ENCODE measurements at regions of chrX and their contacts with region 1.

Region 1: DNA sequence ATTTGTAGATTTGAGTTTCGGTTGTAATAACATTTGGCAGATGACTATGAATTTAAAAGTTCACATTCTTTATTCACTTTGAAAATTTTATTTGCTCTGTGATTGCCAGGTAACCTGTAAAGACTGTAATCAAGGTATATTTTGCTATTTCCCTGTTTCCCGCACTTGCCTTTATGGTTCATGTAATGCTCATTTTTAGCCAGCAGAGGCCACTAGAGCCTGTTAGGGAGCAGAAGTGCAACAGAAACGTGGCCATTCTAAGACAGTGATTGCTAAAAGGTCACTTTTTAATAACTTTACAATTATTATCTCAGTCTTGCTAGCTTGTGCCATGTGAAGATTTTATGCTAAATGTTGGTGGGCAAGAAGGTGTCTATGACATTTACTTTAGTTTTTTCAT is 12.4 kb downstream of the YIPF6 start:
- DNase-seq: peak; percentile 43
- H3K4me3 Mint-ChIP-seq: no peak overlapping the region
- H3K27ac Mint-ChIP-seq: no peak overlapping the region
- H3K4me1 Mint-ChIP-seq: peaks cover 22% of the 10 kb centered on the region
- H3K27me3 Mint-ChIP-seq: no peaks in the 10 kb centered on the region

Region 2: GRCh38 chrX:68238568-68238967 is 272.7 kb before region 1 on chrX:
- CTCF ChIA-PET with region 1: no interaction called
- intact Hi-C with region 1: no loop called
- DNase-seq: no peak
- H3K4me3 Mint-ChIP-seq: no peak overlapping the region
- H3K27ac Mint-ChIP-seq: no peak overlapping the region
- H3K4me1 Mint-ChIP-seq: no peaks in the 10 kb centered on the region
- H3K27me3 Mint-ChIP-seq: no peaks in the 10 kb centered on the region

Region 3: GRCh38 chrX:68273887-68274286 is 237.4 kb before region 1 on chrX:
- CTCF ChIA-PET with region 1: no interaction called
- intact Hi-C with region 1: no loop called
- DNase-seq: no peak
- H3K4me3 Mint-ChIP-seq: no peak overlapping the region
- H3K27ac Mint-ChIP-seq: no peak overlapping the region
- H3K4me1 Mint-ChIP-seq: no peaks in the 10 kb centered on the region
- H3K27me3 Mint-ChIP-seq: no peaks in the 10 kb centered on the region

Region 4: DNA sequence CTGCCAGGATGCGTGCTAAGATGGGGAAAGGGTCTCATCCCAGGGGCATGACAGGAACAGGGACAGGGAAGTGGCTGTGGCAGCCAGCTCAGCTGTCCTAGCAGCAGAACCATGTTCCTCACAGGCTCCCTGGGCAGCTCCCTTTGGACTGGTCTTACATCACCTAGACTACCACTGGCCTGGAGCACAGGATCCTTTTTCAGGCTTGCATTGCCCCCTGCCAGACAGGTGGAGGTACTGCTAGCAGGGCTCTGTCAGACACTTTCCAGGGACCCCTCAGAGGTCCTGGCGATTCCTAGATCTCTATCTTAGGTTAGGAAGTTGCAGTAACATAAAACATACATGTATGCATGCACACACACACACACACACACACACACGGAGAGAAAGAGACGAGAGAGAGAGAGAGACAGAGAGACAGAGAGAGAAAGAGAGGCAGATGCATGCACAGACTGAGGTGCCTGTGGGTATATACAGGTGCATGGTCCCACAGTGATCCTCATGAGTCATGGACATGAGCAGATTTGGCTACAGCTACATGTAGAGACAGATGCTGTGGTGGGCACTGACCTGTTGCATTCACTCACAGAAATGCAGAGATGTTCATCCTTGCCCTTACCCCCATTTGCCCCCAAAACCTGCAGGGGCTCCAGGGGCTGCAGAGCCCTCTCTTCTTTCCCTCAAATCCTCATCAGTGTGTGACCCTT is 199.8 kb after region 1 on chrX:
- CTCF ChIA-PET with region 1: interaction called, 4 read pairs
- intact Hi-C with region 1: loop called (anchors 2 kb)
- DNase-seq: peak; percentile 28
- H3K4me3 Mint-ChIP-seq: no peak overlapping the region
- H3K27ac Mint-ChIP-seq: no peak overlapping the region
- H3K4me1 Mint-ChIP-seq: no peaks in the 10 kb centered on the region
- H3K27me3 Mint-ChIP-seq: no peaks in the 10 kb centered on the region

Region 5: DNA sequence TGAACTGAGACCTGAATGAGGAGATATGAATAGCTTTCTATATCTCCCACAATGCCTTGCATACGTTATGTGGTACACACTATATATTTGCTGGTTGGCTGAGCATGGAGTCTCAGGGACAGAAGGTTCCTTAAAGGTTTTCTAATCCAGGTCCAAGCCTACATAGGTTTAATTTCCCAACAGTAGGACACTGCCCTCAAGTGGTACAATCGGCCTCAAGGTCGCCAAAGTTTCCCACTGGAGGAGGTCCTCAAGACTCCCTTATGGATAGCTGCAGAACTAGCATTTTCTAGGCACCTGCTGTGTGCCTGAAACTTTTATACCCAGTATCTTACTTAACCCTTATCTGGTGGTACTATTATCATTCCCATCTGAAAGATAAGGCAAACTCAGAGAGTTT is 296.6 kb after region 1 on chrX:
- CTCF ChIA-PET with region 1: no interaction called
- intact Hi-C with region 1: loop called (anchors 5 kb)
- DNase-seq: peak; percentile 27
- H3K4me3 Mint-ChIP-seq: no peak overlapping the region
- H3K27ac Mint-ChIP-seq: no peak overlapping the region
- H3K4me1 Mint-ChIP-seq: no peaks in the 10 kb centered on the region
- H3K27me3 Mint-ChIP-seq: peaks cover 6% of the 10 kb centered on the region

Measured in activated naive CD4-positive, alpha-beta T cell treated with anti-CD3 and anti-CD28 coated beads for 36 hours (primary cell).